ENCODE measurements at regions of chr17 and their contacts with region 1.

Region 1: GRCh38 chr17:76758570-76758969 is 20.7 kb downstream of the MFSD11 start:
- DNase-seq: no peak
- ATAC-seq: no peak
- H3K4me3 ChIP-seq: no peak overlapping the region
- H3K27ac ChIP-seq: no peak overlapping the region
- H3K4me1 ChIP-seq: peaks cover 14% of the 10 kb centered on the region
- H3K27me3 ChIP-seq: no peaks in the 10 kb centered on the region
- CTCF ChIP-seq: no peak
- EP300 ChIP-seq: no peak
- POLR2A ChIP-seq: no peak
- RAD21 ChIP-seq: no peak

Region 2: DNA sequence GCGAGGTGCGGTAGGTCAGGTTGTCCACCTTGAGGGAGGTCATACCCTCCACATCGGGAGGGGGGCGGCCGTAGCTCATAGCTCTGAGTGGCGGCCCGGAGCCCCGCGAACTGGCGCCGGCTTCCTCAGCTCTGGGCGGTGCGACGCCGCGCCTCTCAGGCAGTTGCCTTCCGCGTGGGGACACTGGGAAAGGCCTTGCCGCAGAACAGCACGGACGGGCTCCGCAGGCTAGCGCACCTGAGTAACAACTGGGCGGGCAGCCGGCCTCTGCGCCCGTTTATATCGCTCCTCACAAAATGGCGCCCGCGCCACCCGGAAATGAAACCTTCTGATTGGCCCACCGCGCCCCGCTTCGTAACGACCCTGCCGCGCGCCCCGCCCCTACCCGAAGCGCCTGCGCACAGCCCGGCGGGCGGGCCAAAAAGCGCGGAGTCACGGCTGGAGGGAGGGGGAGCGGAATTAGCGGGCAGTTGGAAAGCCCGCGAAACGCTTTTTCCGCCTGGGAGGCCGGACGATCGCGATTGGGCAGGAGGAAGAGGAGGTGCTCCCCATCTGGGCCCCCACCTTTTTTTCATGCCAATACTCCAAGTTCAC is 21.4 kb before region 1 on chr17 and contains the start of gene SRSF2:
- CTCF ChIA-PET with region 1: no interaction called
- POLR2A ChIA-PET with region 1: interaction called, 15 read pairs
- in situ Hi-C with region 1: no loop called
- intact Hi-C with region 1: no loop called
- DNase-seq: peak; percentile 98
- ATAC-seq: peak; percentile 74
- H3K4me3 ChIP-seq: peak within 1 kb of the TSS; percentile 93 to 100 (median 100)
- H3K27ac ChIP-seq: peak within 1 kb of the TSS; percentile 97
- H3K4me1 ChIP-seq: peaks cover 51% of the 10 kb centered on the region
- H3K27me3 ChIP-seq: peaks cover 0 to 3% of the 10 kb centered on the region in 2 experiments; a peak in 1 of 5 replicates
- CTCF ChIP-seq: peak; percentile 18
- EP300 ChIP-seq: peak; percentile 57 to 71; a peak in 3 of 4 replicates
- POLR2A ChIP-seq: peak; percentile 100
- RAD21 ChIP-seq: peak; percentile 63
- total RNA-seq, gene SRSF2: 249 and 319 TPM in 2 replicates

Region 3: DNA sequence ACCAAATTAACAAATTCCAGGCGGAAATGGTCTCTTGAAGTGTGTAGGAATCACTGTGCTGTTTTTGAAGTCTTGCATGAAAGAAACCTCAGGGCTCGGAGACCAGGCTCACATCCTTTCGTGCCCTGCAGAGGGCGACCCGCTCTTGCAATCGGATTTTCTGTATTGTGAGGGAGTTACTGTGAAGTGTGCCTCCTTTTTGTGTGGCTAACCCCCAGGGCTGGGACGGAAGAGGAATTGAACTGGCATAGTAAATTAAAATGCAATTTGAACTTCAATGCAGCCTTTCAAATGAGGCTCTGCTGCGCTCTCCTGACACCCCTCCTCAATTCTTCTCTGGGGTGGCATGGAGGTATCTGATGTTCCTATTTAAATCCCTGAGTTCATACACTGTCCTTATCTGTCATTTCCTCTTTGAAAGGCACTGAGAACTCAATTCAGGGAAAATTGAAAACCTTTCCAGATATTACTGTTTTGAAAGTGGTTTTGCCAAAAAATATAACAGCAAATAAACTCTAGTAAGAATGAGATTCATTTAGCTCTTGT is 58.1 kb after region 1 on chr17:
- CTCF ChIA-PET with region 1: no interaction called
- POLR2A ChIA-PET with region 1: no interaction called
- in situ Hi-C with region 1: no loop called
- intact Hi-C with region 1: no loop called
- DNase-seq: peak; percentile 44
- ATAC-seq: peak; percentile 87
- H3K4me3 ChIP-seq: no peak overlapping the region
- H3K27ac ChIP-seq: no peak overlapping the region
- H3K4me1 ChIP-seq: no peaks in the 10 kb centered on the region
- H3K27me3 ChIP-seq: peaks cover 9 to 28% of the 10 kb centered on the region in 2 experiments; a peak in 4 of 5 replicates
- CTCF ChIP-seq: peak; percentile 78
- EP300 ChIP-seq: no peak
- POLR2A ChIP-seq: no peak
- RAD21 ChIP-seq: peak; percentile 45; the same call in 1 of the 2 replicates